ENCODE measurements at regions of chr5 and their contacts with region 1.

Region 1: GRCh38 chr5:74648835-74649293 is 8.3 kb upstream of the ENC1 start:
- DNase-seq: no peak
- ATAC-seq: peak; percentile 87 to 96
- H3K4me3 ChIP-seq: no peak overlapping the region
- H3K27ac ChIP-seq: no peak overlapping the region
- H3K4me1 ChIP-seq: peaks cover 0 to 3% of the 10 kb centered on the region in 2 donors
- H3K27me3 ChIP-seq: no peaks in the 10 kb centered on the region
- CTCF ChIP-seq: peak; percentile 71 to 81 (median 76)
- POLR2A ChIP-seq: no peak

Region 2: GRCh38 chr5:73902327-73903051 is 746.4 kb before region 1 on chr5:
- in situ Hi-C with region 1: loop called (anchors 5 kb)
- intact Hi-C with region 1: loop called (anchors 1 kb)
- DNase-seq: no peak
- ATAC-seq: peak in 1 of 2 donors; percentile 63
- H3K4me3 ChIP-seq: peak overlapping the region in 1 of 4 donors; percentile 14
- H3K27ac ChIP-seq: no peak overlapping the region
- H3K4me1 ChIP-seq: peaks cover 0 to 3% of the 10 kb centered on the region in 2 donors
- H3K27me3 ChIP-seq: no peaks in the 10 kb centered on the region
- CTCF ChIP-seq: peak; percentile 80 to 89 (median 84)
- POLR2A ChIP-seq: no peak

Region 3: GRCh38 chr5:74035521-74035981 is 613.3 kb before region 1 on chr5:
- in situ Hi-C with region 1: loop called in 2 of 4 experiments (anchors 5 to 25 kb)
- intact Hi-C with region 1: loop called (anchors 2 kb)
- DNase-seq: peak in 1 of 2 donors; percentile 18
- ATAC-seq: peak; percentile 61 to 73
- H3K4me3 ChIP-seq: no peak overlapping the region
- H3K27ac ChIP-seq: no peak overlapping the region
- H3K4me1 ChIP-seq: peaks cover 0 to 6% of the 10 kb centered on the region in 2 donors
- H3K27me3 ChIP-seq: no peaks in the 10 kb centered on the region
- CTCF ChIP-seq: peak in 2 of 5 experiments; percentile 43 to 51
- POLR2A ChIP-seq: no peak

Region 4: DNA sequence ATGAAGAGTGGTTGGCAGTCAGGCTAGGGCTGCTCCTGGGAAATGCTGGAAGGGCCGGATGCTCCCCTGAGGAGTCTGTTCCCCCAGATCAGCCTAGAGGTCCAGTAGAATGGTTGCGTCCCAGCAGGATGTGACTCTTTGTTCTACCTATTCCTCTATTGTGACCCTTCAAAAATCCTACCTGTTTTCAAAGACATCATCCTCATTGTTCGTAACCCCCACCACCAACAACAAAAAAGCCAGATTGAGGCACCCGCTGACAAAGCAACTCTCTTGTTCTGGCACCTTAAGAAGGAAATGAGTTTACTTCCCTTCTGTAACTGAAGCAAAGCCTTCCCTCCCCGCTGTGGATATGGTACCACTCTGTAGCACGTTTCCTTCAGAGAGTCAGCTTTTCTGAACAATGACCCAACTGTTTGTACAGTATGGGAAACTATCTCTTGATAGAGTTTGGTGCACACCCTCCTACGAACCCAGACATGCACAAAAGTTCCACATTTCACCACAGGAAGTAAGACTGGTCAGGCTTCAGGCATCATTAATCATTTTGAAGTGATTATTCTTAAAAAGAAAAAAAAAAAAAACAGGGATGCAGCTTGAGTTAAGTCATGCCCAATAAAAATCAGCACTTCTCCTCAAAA is 215.5 kb before region 1 on chr5:
- in situ Hi-C with region 1: no loop called
- intact Hi-C with region 1: no loop called
- DNase-seq: no peak
- ATAC-seq: no peak
- H3K4me3 ChIP-seq: peak overlapping the region in 1 of 4 donors; percentile 10
- H3K27ac ChIP-seq: no peak overlapping the region
- H3K4me1 ChIP-seq: peaks cover 0 to 9% of the 10 kb centered on the region in 2 donors
- H3K27me3 ChIP-seq: no peaks in the 10 kb centered on the region
- CTCF ChIP-seq: no peak
- POLR2A ChIP-seq: no peak